Right lobe of liver (tissue), 6 donors: ENCODE measurements at regions of chr16 and their contacts with region 1.

Region 1: DNA sequence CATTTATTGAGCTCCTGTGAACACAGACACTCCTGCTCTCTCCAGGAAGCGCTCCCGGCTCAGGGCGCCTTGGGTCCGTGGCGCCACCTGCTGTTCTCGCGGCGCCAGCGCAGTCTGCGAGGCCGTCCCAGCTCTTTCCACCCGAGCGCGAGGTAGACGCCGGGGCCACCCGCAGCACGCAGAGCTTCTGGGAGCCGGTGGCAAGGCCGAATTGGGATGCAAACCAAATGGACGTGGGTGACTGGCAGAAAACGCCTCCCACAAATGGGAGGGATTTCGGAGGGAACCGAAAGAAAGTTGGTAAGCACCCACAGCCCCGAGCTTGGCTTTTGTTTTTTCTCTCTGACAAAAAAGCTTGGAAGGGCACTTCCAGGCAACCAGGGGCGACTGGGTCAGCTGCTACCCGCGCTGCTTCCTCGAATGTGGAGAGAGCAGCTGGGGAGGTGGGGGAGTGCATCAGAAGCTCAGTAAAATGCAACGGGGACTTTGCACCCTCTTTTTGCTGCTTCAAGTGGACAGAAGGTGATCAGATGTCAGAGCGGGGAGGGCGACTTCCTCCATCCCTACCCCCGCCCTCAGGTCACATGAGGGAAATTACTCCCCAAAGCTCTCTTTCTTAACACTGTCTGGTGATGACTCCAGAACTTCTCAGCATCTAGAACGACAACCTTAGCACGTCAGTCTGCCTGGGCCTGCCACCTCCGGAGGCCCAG is 13.5 kb upstream of the N4BP1 start:
- DNase-seq: peak; percentile 91 to 94 (median 92)
- ATAC-seq: peak; percentile 98 to 100 (median 98)
- H3K4me3 ChIP-seq: peak overlapping the region; percentile 42 to 62 (median 58)
- H3K27ac ChIP-seq: peak overlapping the region; percentile 88 to 92 (median 89)
- H3K4me1 ChIP-seq: peaks cover 0 to 6% (median 2%) of the 10 kb centered on the region in 4 donors
- H3K27me3 ChIP-seq: no peaks in the 10 kb centered on the region
- CTCF ChIP-seq: peak; percentile 99 to 100 (median 99)
- POLR2A ChIP-seq: peak; percentile 41

Region 2: GRCh38 chr16:48353565-48354163 is 269.8 kb before region 1 on chr16:
- intact Hi-C with region 1: loop called in 1 of 2 experiments (anchors 10 kb)
- DNase-seq: no peak
- ATAC-seq: peak; percentile 80 to 89 (median 84)
- H3K4me3 ChIP-seq: no peak overlapping the region
- H3K27ac ChIP-seq: no peak overlapping the region
- H3K4me1 ChIP-seq: no peaks in the 10 kb centered on the region
- H3K27me3 ChIP-seq: no peaks in the 10 kb centered on the region
- CTCF ChIP-seq: peak; percentile 76 to 90 (median 88)
- POLR2A ChIP-seq: no peak

Region 3: GRCh38 chr16:48810803-48811453 is 187.5 kb after region 1 on chr16:
- intact Hi-C with region 1: no loop called
- DNase-seq: no peak
- ATAC-seq: peak in 2 of 4 donors; percentile 21 to 38
- H3K4me3 ChIP-seq: peak overlapping the region in 1 of 3 donors; percentile 21
- H3K27ac ChIP-seq: no peak overlapping the region
- H3K4me1 ChIP-seq: peaks cover 0 to 4% (median 0%) of the 10 kb centered on the region in 4 donors
- H3K27me3 ChIP-seq: peaks cover 0 to 4% of the 10 kb centered on the region in 2 donors
- CTCF ChIP-seq: no peak
- POLR2A ChIP-seq: no peak